CD8-positive, alpha-beta T cell (primary cell): ENCODE measurements at regions of chr14 and their contacts with region 1.

Region 1: GRCh38 chr14:102139248-102140026 is at the start of gene WDR20:
- DNase-seq: peak; percentile 98 to 100 (median 99)
- ATAC-seq: peak; percentile 96
- H3K4me3 ChIP-seq: peak within 1 kb of the TSS; percentile 94 to 95
- H3K4me3 Mint-ChIP-seq: peak within 1 kb of the TSS; percentile 99
- H3K27ac ChIP-seq: peak within 1 kb of the TSS; percentile 87 to 91
- H3K27ac Mint-ChIP-seq: peak within 1 kb of the TSS; percentile 98
- H3K4me1 ChIP-seq: peaks cover 25% of the 10 kb centered on the region
- H3K4me1 Mint-ChIP-seq: peaks cover 29% of the 10 kb centered on the region
- H3K27me3 ChIP-seq: no peaks in the 10 kb centered on the region
- H3K27me3 Mint-ChIP-seq: no peaks in the 10 kb centered on the region
- CTCF ChIP-seq: no peak
- total RNA-seq, gene WDR20: 40.8 to 46.3 TPM

Region 2: GRCh38 chr14:101559624-101560533 is 579.6 kb before region 1 on chr14:
- CTCF ChIA-PET with region 1: no interaction called
- POLR2A ChIA-PET with region 1: no interaction called
- intact Hi-C with region 1: no loop called
- DNase-seq: no peak
- ATAC-seq: no peak
- H3K4me3 ChIP-seq: no peak overlapping the region
- H3K4me3 Mint-ChIP-seq: no peak overlapping the region
- H3K27ac ChIP-seq: no peak overlapping the region
- H3K27ac Mint-ChIP-seq: no peak overlapping the region
- H3K4me1 ChIP-seq: no peaks in the 10 kb centered on the region
- H3K4me1 Mint-ChIP-seq: peaks cover 7% of the 10 kb centered on the region
- H3K27me3 ChIP-seq: peaks cover 0 to 30% of the 10 kb centered on the region in 2 experiments
- H3K27me3 Mint-ChIP-seq: peaks cover 48% of the 10 kb centered on the region
- CTCF ChIP-seq: no peak

Region 3: DNA sequence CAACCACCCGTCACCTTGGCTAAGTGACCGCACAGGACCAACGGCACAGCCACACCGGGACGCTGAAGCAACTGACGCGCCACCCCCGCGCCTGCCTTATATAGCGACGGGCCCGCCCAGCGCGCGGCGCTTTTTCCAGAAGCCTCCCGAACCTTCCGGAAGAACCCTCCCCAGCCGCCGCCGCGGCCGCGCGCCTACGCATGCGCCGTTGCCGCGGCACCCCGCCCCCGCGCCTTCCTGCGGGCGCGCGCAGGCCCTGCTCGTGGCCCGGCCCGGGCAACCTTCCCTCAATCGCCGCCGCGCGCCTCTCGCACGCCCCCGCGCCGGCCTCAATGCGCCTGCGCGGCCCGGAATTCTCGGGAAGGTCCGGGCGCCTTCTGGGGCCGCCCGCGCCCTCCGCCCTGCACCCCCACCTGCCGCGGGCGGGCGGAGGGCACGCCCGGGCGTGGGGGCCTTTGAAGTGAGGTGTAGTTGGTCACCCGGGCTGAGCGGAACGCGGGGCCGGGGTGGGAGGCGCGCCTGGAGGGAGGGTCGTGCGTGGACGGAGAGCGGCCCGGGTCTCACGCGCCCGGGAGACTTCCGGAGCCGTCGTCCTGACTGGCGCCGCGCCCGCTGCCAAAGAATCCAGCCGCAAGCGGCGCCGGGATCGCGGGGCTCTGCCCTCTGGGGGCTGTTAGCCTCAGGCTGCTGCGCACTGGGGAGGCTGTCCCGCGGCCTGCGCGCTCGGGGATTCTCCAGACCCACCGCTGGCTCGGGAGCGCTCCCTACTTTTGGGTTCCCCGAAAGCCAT is 52.3 kb before region 1 on chr14 and contains the start of gene HSP90AA1:
- CTCF ChIA-PET with region 1: no interaction called
- POLR2A ChIA-PET with region 1: interaction called, 3 read pairs
- intact Hi-C with region 1: loop called (anchors 1 to 2 kb)
- DNase-seq: peak; percentile 88 to 98 (median 95)
- ATAC-seq: peak; percentile 74
- H3K4me3 ChIP-seq: peak within 1 kb of the TSS; percentile 75 to 78
- H3K4me3 Mint-ChIP-seq: peak within 1 kb of the TSS; percentile 97
- H3K27ac ChIP-seq: peak within 1 kb of the TSS; percentile 96 to 97
- H3K27ac Mint-ChIP-seq: peak within 1 kb of the TSS; percentile 99
- H3K4me1 ChIP-seq: peaks cover 49% of the 10 kb centered on the region
- H3K4me1 Mint-ChIP-seq: peaks cover 58% of the 10 kb centered on the region
- H3K27me3 ChIP-seq: no peaks in the 10 kb centered on the region
- H3K27me3 Mint-ChIP-seq: no peaks in the 10 kb centered on the region
- CTCF ChIP-seq: no peak
- total RNA-seq, gene HSP90AA1: 532 to 539 TPM

Region 4: DNA sequence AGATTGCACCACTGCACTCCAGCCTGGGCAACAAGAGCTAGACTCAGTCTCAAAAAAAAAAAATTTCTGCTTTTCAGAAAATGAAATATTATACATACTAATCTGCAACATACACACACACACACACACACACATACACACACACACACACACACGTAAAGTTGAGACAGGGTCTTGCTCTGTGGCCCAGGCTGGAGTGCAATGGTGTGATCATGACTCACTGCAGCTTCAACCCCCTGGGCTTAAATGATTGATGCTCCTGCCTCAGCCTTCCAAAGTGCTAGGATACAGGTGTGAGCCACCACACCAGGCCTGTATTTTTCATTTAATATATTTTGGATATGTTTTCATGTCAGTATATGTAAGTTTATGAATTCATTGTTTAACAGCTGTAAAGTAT is 18.5 kb before region 1 on chr14:
- CTCF ChIA-PET with region 1: no interaction called
- POLR2A ChIA-PET with region 1: no interaction called
- intact Hi-C with region 1: no loop called
- DNase-seq: no peak
- ATAC-seq: no peak
- H3K4me3 ChIP-seq: no peak overlapping the region
- H3K4me3 Mint-ChIP-seq: no peak overlapping the region
- H3K27ac ChIP-seq: no peak overlapping the region
- H3K27ac Mint-ChIP-seq: no peak overlapping the region
- H3K4me1 ChIP-seq: no peaks in the 10 kb centered on the region
- H3K4me1 Mint-ChIP-seq: no peaks in the 10 kb centered on the region
- H3K27me3 ChIP-seq: no peaks in the 10 kb centered on the region
- H3K27me3 Mint-ChIP-seq: no peaks in the 10 kb centered on the region
- CTCF ChIP-seq: no peak

Region 5: GRCh38 chr14:102304611-102305509 is 165.4 kb after region 1 on chr14 and contains the start of gene MOK:
- CTCF ChIA-PET with region 1: no interaction called
- POLR2A ChIA-PET with region 1: no interaction called
- intact Hi-C with region 1: loop called (anchors 1 kb)
- DNase-seq: peak; percentile 94 to 99 (median 98)
- ATAC-seq: peak; percentile 92
- H3K4me3 ChIP-seq: peak within 1 kb of the TSS; percentile 83 to 97
- H3K4me3 Mint-ChIP-seq: peak within 1 kb of the TSS; percentile 91
- H3K27ac ChIP-seq: peak within 1 kb of the TSS; percentile 84 to 88
- H3K27ac Mint-ChIP-seq: peak within 1 kb of the TSS; percentile 94
- H3K4me1 ChIP-seq: peaks cover 5% of the 10 kb centered on the region
- H3K4me1 Mint-ChIP-seq: peaks cover 10% of the 10 kb centered on the region
- H3K27me3 ChIP-seq: no peaks in the 10 kb centered on the region
- H3K27me3 Mint-ChIP-seq: peaks cover 2% of the 10 kb centered on the region
- CTCF ChIP-seq: no peak
- total RNA-seq, gene MOK: 2.7 to 3.6 TPM

Region 6: DNA sequence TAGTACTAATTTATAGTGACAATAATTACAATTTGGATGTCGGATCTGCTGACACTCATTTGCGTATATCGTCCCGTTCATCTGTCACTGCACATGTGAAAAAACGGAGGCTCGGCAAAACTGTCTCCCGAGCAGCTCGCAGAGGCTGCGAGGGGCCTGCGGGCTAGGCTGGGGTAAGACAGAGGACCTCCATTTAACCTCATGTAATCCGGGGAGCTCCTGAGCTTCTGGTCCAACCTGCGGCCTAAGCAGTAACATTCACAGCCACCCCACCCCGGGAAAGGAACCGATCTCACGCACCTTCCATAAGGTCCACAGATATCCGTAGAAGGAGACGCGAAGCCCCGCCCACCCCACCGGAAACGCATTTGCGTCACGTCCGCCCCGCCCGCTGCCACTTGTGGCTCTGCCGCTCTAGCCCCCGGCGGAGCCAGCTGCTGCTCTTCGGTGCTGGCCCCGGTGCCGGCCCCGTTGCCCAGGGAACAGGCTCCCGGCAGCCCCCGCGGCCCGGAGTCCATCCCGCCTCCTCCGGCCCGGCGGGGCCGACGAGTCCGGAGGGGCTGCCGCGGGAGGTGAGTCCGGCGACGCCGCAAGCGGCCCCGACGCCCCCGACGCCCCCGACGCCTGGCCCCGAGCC is 223.2 kb after region 1 on chr14 and contains the starts of genes CINP and TECPR2:
- CTCF ChIA-PET with region 1: no interaction called
- POLR2A ChIA-PET with region 1: no interaction called
- intact Hi-C with region 1: loop called (anchors 1 to 2 kb)
- DNase-seq: peak; percentile 93 to 97 (median 96)
- ATAC-seq: peak; percentile 90
- H3K4me3 ChIP-seq: peak within 1 kb of the TSS; percentile 67 to 75
- H3K4me3 Mint-ChIP-seq: peak within 1 kb of the TSS; percentile 95
- H3K27ac ChIP-seq: peak within 1 kb of the TSS; percentile 82 to 86
- H3K27ac Mint-ChIP-seq: peak within 1 kb of the TSS; percentile 96
- H3K4me1 ChIP-seq: peaks cover 15% of the 10 kb centered on the region
- H3K4me1 Mint-ChIP-seq: peaks cover 24% of the 10 kb centered on the region
- H3K27me3 ChIP-seq: no peaks in the 10 kb centered on the region
- H3K27me3 Mint-ChIP-seq: no peaks in the 10 kb centered on the region
- CTCF ChIP-seq: no peak
- total RNA-seq, gene CINP: 15.9 to 19.2 TPM
- total RNA-seq, gene TECPR2: 3.4 to 5.8 TPM

Region 7: DNA sequence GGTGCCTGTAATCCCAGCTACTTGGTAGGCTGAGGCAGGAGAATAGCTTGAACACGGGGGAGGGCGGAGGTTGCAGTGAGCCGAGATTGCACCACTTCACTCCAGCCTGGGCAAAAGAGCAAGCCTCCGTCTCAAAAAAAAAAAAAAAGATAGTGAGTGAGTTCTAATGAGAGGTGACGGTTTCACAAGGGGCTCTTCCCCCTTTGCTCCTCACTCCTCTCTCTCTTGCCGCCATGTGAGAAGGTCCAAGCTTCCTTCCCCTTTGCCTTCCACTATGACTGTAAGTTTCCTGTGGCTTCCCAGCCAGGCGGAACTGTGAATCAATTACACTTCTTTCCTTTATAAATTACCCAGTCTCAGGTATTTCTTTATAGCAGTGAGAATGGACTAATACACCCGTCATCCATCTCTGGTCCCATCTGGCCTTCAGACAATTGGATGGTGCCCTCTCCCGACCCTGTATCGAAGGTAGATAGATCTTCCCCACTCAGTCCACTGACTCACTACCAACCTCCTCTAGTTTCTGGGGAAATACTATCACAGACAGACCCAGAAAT is 426.0 kb after region 1 on chr14:
- CTCF ChIA-PET with region 1: no interaction called
- POLR2A ChIA-PET with region 1: no interaction called
- intact Hi-C with region 1: no loop called
- DNase-seq: peak in 1 of 9 experiments; percentile 29
- ATAC-seq: no peak
- H3K4me3 ChIP-seq: no peak overlapping the region
- H3K4me3 Mint-ChIP-seq: no peak overlapping the region
- H3K27ac ChIP-seq: no peak overlapping the region
- H3K27ac Mint-ChIP-seq: no peak overlapping the region
- H3K4me1 ChIP-seq: peaks cover 19% of the 10 kb centered on the region
- H3K4me1 Mint-ChIP-seq: peaks cover 16% of the 10 kb centered on the region
- H3K27me3 ChIP-seq: no peaks in the 10 kb centered on the region
- H3K27me3 Mint-ChIP-seq: no peaks in the 10 kb centered on the region
- CTCF ChIP-seq: no peak